Endothelial cell of umbilical vein (primary cell): ENCODE measurements at regions of chr2 and their contacts with region 1.

Region 1: DNA sequence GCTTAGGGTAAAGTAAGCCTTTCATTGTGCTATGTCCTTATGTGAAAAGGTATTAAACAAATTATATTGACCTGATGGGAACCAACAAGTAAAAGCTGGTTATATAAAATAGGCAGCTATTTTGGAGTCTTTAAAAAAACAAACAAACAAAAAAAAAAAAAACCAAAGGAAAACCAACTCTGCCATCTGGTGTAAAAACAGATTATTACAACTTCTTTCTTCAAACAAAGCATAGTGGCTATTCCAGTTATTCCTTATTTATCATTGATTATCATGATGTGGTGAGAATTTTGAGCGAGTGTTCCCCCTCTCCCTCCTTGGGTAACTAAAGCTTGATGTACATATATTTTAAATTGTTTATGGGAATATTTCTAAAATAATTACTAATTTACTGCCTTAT is 122.4 kb upstream of the FHL2 start:
- DNase-seq: peak; percentile 47
- H3K4me3 ChIP-seq: no peak overlapping the region
- H3K27ac ChIP-seq: no peak overlapping the region
- H3K4me1 ChIP-seq: no peaks in the 10 kb centered on the region
- H3K27me3 ChIP-seq: no peaks in the 10 kb centered on the region
- CTCF ChIP-seq: peak in 1 of 2 donors; percentile 21
- POLR2A ChIP-seq: no peak

Region 2: DNA sequence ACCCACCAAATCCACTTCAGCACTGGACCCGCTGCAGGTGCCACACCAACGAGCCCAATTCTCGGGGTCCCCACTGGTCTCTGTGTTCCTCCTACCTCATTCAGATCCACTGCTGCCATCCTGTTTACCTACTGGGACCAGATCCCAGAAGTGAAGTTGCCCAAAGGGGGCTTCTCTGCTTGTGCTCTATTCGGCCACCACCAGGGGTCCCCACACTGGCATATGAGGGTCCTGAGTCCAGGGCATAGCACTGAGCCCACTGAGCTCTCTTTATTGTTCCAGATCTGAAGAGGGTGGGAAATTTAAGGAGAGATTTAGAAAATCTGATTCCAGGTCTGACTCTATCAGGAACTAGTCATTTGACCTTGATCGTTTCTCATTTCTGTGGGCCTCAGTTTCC is 277.2 kb before region 1 on chr2:
- CTCF ChIA-PET with region 1: interaction called, 14 read pairs
- POLR2A ChIA-PET with region 1: no interaction called
- dilution Hi-C with region 1: no loop called
- intact Hi-C with region 1: loop called (anchors 5 kb)
- DNase-seq: no peak
- H3K4me3 ChIP-seq: no peak overlapping the region
- H3K27ac ChIP-seq: no peak overlapping the region
- H3K4me1 ChIP-seq: no peaks in the 10 kb centered on the region
- H3K27me3 ChIP-seq: peaks cover 1 to 3% of the 10 kb centered on the region in 2 experiments
- CTCF ChIP-seq: peak; percentile 28 to 58
- POLR2A ChIP-seq: no peak

Region 3: GRCh38 chr2:105344704-105345345 is 176.4 kb before region 1 on chr2:
- CTCF ChIA-PET with region 1: interaction called, 219 read pairs
- POLR2A ChIA-PET with region 1: no interaction called
- dilution Hi-C with region 1: no loop called
- intact Hi-C with region 1: loop called (anchors 1 kb)
- DNase-seq: peak; percentile 62
- H3K4me3 ChIP-seq: no peak overlapping the region
- H3K27ac ChIP-seq: no peak overlapping the region
- H3K4me1 ChIP-seq: no peaks in the 10 kb centered on the region
- H3K27me3 ChIP-seq: no peaks in the 10 kb centered on the region
- CTCF ChIP-seq: peak; percentile 12 to 24
- POLR2A ChIP-seq: no peak

Region 4: DNA sequence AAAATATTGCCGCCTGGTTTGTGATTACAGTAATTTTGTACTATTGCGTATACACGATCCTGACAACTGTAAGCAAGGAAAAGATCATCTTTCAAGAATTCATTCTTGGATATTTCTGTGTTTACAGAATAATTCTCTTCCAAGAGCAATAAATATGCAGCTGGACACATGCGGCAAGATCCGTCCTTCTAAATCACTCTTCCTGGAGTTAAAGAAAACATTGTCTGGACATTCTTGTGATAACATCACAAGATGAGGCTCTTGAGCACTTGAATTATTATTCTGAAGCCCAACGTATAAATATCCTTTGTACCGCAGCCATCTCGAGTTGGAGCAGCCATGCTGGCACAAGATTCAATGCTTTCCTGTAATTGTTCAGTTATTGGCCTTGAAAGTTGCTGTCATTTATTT is 132.2 kb before region 1 on chr2:
- CTCF ChIA-PET with region 1: interaction called, 31 read pairs
- POLR2A ChIA-PET with region 1: interaction called, 4 read pairs
- dilution Hi-C with region 1: no loop called
- intact Hi-C with region 1: no loop called
- DNase-seq: peak; percentile 99
- H3K4me3 ChIP-seq: no peak overlapping the region
- H3K27ac ChIP-seq: peak overlapping the region; percentile 92
- H3K4me1 ChIP-seq: peaks cover 72% of the 10 kb centered on the region
- H3K27me3 ChIP-seq: no peaks in the 10 kb centered on the region
- CTCF ChIP-seq: no peak
- POLR2A ChIP-seq: peak; percentile 72

Region 5: DNA sequence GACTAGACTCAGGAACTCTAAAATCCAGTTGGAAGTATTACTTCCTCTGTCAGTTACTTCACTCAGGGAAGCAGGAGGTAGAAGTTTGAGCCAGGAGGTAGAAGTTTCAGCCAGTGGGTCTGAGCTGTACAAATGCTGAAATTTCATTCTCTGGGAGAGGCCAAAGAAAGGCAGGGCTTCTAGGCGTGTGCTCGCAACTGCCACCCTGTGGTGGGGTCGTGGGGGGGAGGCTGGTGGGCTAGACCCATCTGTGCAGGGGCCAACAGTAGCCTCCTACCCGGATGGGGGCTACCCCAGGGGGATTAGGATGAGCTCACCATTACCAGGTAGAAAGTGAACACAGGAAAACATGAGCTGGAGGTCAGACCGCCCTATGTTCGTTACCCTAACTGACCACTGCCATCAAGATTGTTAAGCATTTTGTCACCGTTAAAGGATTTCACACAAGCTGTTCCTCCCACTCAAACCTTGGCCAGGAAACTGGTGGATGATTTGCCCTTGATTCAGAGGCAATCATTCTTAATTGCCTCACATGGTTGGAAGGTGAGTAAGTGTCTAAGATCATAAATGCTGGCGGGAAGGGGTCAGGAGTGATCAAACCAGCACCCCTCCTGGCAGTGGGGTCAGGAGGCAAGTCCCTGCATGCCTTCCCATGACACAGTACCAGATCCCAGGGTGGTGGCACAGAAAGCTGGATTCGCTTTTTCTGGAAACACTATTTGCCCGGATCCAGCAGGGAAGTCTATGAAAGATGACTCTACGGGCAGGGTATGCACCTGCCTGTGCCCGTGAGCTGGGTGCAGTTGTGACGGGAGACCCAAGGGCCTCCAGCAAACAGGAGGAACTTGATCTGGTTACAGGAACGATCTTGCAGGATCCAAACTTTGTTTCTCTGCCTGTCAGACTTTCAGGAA is 117.2 kb before region 1 on chr2:
- CTCF ChIA-PET with region 1: interaction called, 24 read pairs
- POLR2A ChIA-PET with region 1: interaction called, 3 read pairs
- dilution Hi-C with region 1: no loop called
- intact Hi-C with region 1: no loop called
- DNase-seq: peak; percentile 86
- H3K4me3 ChIP-seq: no peak overlapping the region
- H3K27ac ChIP-seq: peak overlapping the region; percentile 66
- H3K4me1 ChIP-seq: peaks cover 40% of the 10 kb centered on the region
- H3K27me3 ChIP-seq: no peaks in the 10 kb centered on the region
- CTCF ChIP-seq: peak; percentile 48 to 62
- POLR2A ChIP-seq: peak; percentile 10

Region 6: GRCh38 chr2:105454801-105455485 is 66.3 kb before region 1 on chr2:
- CTCF ChIA-PET with region 1: interaction called, 9 read pairs
- POLR2A ChIA-PET with region 1: interaction called, 6 read pairs
- dilution Hi-C with region 1: no loop called
- intact Hi-C with region 1: loop called (anchors 2 kb)
- DNase-seq: peak; percentile 72
- H3K4me3 ChIP-seq: no peak overlapping the region
- H3K27ac ChIP-seq: peak overlapping the region; percentile 22
- H3K4me1 ChIP-seq: peaks cover 9% of the 10 kb centered on the region
- H3K27me3 ChIP-seq: no peaks in the 10 kb centered on the region
- CTCF ChIP-seq: peak; percentile 11 to 46
- POLR2A ChIP-seq: no peak